Activated naive CD4-positive, alpha-beta T cell treated with anti-CD3 and anti-CD28 coated beads for 36 hours (primary cell): ENCODE measurements at regions of chr7 and their contacts with region 1.

Region 1: DNA sequence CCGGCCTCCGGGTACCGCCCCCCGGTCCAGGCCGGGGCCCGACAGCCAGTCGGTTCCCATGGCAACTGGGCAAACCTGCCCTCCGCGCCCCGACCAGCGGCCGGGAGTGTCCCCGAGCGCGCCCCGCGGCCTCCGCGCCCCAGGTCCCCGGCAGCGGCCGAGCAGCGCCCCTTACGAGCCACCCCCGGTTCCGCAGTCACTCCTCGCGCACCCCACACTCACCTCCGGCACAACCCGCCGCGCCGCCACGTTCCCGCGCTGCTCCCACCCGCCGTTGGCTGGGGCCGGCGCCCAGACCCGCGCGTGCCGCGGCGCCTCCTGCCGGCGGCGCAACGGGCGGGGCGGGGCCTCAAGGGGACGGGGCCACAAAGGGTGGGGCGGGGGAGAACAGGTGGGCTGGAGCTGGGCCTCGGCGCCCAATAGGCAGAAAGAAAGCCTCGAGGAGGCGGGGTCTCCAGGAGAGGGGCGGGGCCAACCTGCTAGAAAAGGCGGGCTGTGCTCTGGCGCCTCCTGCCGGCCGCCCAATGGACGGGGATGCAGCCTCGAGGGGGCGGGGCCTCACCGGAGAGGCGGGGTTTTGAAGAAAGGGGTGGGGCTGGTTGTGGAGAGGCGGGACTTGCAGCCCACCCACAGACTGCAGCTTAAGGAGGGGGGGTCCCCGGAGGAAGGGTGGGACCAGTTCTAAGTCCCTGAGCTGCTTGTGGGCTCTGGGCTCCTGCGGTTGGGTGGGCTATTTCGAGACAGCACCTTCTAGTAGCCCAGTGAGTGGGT is at the start of gene RADIL:
- DNase-seq: peak; percentile 96
- H3K4me3 Mint-ChIP-seq: peak within 1 kb of the TSS; percentile 56
- H3K27ac Mint-ChIP-seq: no peak within 1 kb of the TSS
- H3K4me1 Mint-ChIP-seq: peaks cover 10% of the 10 kb centered on the region
- H3K27me3 Mint-ChIP-seq: peaks cover 36% of the 10 kb centered on the region
- total RNA-seq, gene RADIL: 0.42 to 0.55 TPM

Region 2: DNA sequence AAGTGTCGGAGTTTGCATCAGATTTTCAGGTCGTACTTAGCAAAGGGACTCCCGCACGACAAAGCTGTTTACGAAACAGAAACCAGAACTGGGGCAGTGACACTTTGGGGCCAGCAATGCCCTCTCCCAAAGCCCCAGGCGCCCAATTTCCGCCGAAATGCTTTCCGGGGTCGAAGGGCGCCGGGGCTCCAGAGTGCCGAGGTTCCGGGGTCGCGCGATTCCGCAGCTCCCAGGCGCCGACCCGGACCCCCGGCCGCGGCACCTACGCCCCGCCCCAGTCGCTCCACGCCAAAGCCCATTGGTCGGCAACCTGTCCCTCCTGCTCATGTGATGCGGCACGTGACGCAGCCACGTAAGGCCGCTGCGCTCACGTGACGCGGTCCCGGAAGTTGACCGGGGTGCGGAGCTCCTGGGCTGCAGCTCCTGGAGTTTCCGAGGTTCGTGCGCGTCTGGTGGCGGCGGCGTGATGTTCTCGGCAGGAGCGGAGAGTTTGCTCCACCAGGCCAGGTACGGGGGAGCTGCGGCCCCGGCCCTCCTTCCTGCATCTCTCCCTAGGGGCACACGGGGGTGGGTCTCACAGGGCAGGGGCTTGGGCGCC is 108.2 kb before region 1 on chr7 and contains the start of gene AP5Z1:
- CTCF ChIA-PET with region 1: no interaction called
- intact Hi-C with region 1: loop called (anchors 1 kb)
- DNase-seq: peak; percentile 94
- H3K4me3 Mint-ChIP-seq: peak within 1 kb of the TSS; percentile 98
- H3K27ac Mint-ChIP-seq: peak within 1 kb of the TSS; percentile 93
- H3K4me1 Mint-ChIP-seq: peaks cover 40% of the 10 kb centered on the region
- H3K27me3 Mint-ChIP-seq: no peaks in the 10 kb centered on the region
- total RNA-seq, gene AP5Z1: 15.3 to 18.1 TPM

Region 3: DNA sequence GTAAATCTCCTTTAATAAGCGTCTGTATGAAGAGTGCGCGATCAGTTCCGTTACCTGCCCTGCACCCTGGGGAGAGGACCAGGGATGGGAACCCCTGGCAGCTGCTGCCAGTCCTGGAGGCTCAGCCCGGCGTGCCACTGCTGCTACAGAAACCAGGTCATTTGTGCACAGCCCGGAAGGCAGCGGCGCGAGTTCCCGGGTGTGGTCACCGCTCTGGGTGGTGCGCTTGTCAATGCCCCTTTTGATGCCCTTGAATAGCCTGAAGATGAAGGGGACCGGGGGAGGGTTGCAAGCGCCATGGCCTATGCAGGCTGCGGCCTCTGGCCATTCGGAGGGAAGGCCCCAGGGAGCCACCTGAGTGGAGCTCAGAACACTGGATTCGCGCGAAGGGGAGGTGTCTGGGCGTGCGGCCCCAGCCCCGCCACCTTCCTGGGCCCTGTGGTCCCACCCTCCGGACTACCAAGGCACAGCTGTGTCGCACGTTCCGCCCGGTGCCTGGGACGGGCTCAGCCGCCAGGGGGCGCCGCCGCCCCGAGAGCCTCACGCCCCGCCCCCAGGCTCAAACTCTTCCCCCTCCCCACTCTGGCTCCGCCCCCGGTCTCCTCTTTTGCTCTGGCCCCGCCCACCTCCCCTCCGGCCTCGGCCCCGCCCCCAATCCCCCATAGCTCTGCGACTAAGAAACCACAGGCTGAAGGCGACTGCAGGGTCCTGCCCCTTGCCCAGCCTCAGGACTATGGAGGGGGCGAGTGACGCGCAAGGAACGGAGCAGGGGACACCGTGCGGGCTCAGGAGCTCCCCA is 91.6 kb before region 1 on chr7:
- CTCF ChIA-PET with region 1: interaction called, 23 read pairs
- intact Hi-C with region 1: loop called (anchors 1 kb)
- DNase-seq: peak; percentile 81
- H3K4me3 Mint-ChIP-seq: no peak overlapping the region
- H3K27ac Mint-ChIP-seq: no peak overlapping the region
- H3K4me1 Mint-ChIP-seq: peaks cover 3% of the 10 kb centered on the region
- H3K27me3 Mint-ChIP-seq: no peaks in the 10 kb centered on the region

Region 4: DNA sequence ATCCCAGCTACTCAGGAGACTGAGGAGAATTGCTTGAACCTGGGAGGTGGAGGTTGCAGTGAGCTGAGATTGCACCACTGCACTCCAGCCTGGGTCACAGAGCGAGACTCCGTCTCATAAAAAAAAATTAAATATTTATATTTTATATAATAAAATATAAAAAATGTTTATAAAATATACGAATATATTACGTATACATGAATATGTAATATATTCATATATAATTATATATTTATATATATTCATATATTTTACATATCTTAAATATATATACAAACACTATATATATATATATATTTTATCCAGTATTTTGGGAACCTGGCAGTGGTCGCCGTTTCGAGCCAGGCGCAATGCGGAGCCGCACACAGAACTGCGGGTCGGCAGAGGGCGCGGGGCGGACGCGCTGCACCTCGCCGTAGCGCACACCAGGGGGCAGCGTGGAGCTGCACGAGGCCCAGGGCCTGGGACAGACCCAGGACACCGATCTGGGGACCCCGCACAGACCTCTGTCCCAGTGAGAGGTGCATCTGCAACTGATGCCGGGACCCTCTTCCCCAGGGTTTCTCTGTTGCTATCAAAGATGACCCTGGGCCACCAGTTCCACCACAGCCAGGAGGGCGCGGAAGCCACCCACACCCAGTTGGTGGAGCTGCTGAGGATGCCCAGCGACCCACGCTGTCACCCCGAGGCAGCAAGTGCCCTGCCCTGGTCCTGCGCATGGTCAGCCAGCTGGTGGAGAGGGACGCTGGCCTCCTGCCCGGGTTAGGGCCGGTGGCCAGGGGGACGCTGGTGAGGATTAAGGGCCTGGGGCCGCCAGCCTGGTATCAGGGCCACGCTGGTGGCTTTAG is 85.5 kb before region 1 on chr7:
- CTCF ChIA-PET with region 1: interaction called, 23 read pairs
- intact Hi-C with region 1: loop called (anchors 1 kb)
- DNase-seq: peak; percentile 60
- H3K4me3 Mint-ChIP-seq: no peak overlapping the region
- H3K27ac Mint-ChIP-seq: no peak overlapping the region
- H3K4me1 Mint-ChIP-seq: no peaks in the 10 kb centered on the region
- H3K27me3 Mint-ChIP-seq: no peaks in the 10 kb centered on the region

Region 5: DNA sequence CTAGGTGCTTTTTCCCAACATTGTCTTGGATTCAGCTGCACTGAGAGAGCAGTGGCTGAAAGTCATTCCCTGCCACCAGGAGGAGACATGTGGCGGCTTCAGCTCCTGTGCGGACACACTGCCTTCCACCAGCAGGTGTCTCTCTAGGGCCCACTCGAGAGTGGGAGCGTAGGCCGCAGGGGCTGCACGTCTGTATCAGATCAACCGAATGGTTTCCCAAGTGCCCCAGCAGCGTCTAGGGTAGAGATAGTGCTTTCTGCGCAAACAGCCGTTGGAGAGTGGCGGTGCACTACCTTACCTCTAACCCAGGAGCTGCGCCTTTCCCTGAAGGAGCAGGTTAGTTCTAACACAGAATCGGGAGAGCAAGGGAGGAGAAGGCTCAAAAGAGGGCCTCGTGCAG is 53.4 kb before region 1 on chr7:
- CTCF ChIA-PET with region 1: interaction called, 5 read pairs
- intact Hi-C with region 1: loop called (anchors 1 kb)
- DNase-seq: peak; percentile 74
- H3K4me3 Mint-ChIP-seq: no peak overlapping the region
- H3K27ac Mint-ChIP-seq: no peak overlapping the region
- H3K4me1 Mint-ChIP-seq: peaks cover 2% of the 10 kb centered on the region
- H3K27me3 Mint-ChIP-seq: no peaks in the 10 kb centered on the region

Region 6: DNA sequence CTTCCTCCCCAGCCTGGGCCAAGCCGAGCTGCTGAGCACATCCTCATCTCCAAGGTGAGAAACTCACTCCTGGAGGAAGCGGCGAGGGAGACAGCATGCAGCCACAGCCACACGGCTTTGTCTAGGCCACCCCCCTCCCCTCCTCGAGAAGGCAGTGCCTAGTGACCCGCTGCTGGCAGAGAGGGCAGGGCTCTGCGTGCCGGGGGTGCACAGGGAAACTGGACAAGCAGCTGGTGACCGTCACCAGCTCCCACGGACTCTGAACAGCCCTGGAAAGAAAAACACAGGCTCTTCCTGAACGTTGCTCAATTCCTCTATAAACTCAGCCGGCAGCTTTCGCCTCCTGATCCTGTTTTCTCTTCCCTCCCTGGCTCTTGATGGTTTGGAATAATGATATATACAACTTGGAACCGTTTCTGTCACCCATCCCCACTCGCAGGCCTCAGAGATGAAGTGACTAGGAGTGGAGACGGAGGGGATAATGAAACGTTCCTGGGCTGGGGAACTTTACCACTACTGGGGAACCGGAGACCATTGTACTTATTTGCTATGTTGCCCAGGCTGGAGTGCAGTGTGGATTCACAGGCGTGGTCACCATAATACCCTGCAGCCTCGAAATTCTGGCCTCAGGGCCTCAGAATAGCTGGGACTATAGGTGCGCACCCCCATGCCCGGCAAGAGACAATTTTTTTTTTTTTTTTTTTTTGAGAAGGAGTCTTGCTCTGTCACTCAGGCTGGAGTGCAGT is 41.1 kb before region 1 on chr7:
- CTCF ChIA-PET with region 1: no interaction called
- intact Hi-C with region 1: no loop called
- DNase-seq: no peak
- H3K4me3 Mint-ChIP-seq: no peak overlapping the region
- H3K27ac Mint-ChIP-seq: no peak overlapping the region
- H3K4me1 Mint-ChIP-seq: peaks cover 3% of the 10 kb centered on the region
- H3K27me3 Mint-ChIP-seq: peaks cover 7% of the 10 kb centered on the region